Mammary epithelial cell (primary cell): ENCODE measurements at regions of chr3 and their contacts with region 1.

Region 1: DNA sequence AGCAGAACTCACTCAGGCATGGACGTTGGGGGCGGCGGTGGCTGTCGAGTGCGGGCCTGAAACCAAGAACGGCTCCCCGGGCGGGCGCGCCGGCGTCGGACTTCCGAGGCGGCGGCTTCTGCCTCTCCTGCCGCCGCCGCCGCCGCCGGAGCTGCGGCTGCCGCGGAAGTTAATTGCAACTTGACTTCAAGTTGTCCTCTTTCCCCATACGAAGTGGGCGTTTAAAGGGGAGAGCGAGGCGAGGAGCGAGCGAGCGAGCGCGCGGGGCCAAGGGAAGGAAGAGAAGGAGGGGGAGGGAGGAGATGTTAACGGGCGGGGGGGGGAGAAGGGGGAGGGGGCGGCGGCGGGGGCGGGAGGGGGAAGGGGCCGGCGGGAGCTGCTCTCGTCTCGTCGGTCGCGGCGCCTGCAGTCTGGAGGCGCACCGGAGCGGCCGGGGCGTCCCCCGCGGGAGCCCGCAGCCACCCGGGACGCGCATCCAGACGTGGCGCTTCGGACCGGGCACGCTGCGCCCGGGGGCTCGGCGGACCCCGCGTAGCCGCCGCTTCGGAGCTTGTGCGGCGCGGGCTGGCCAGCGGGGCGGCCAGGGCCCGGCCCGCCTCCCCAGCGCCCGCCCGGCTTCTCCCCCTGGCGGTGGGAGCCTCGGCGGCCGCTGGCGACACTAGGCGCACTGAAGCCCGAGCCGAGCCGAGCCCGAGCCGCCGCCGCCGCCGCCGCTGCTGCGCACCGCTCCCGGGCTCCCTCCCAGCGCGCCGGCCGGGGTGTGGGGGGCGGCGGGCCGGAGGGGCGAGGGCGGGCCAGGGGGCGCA is 19.7 kb upstream of the SATB1 start:
- DNase-seq: peak; percentile 47
- H3K4me3 ChIP-seq: peak overlapping the region; percentile 17 to 44 (median 40)
- H3K27ac ChIP-seq: no peak overlapping the region
- H3K4me1 ChIP-seq: peaks cover 10% of the 10 kb centered on the region
- H3K27me3 ChIP-seq: peaks cover 43% of the 10 kb centered on the region
- CTCF ChIP-seq: peak in 1 of 2 donors; percentile 27

Region 2: GRCh38 chr3:18425641-18426257 is 19.0 kb before region 1 on chr3:
- CTCF ChIA-PET with region 1: no interaction called
- dilution Hi-C with region 1: no loop called
- in situ Hi-C with region 1: no loop called
- intact Hi-C with region 1: loop called (anchors 2 kb)
- DNase-seq: no peak
- H3K4me3 ChIP-seq: peak overlapping the region; percentile 66 to 87 (median 74)
- H3K27ac ChIP-seq: no peak overlapping the region
- H3K4me1 ChIP-seq: peaks cover 8% of the 10 kb centered on the region
- H3K27me3 ChIP-seq: peaks cover 4% of the 10 kb centered on the region
- CTCF ChIP-seq: no peak

Region 3: GRCh38 chr3:18499301-18499700 is 54.5 kb after region 1 on chr3:
- CTCF ChIA-PET with region 1: no interaction called
- dilution Hi-C with region 1: no loop called
- in situ Hi-C with region 1: no loop called
- intact Hi-C with region 1: no loop called
- DNase-seq: peak; percentile 37
- H3K4me3 ChIP-seq: no peak overlapping the region
- H3K27ac ChIP-seq: peak overlapping the region; percentile 7
- H3K4me1 ChIP-seq: peaks cover 18% of the 10 kb centered on the region
- H3K27me3 ChIP-seq: no peaks in the 10 kb centered on the region
- CTCF ChIP-seq: no peak